Calu3 (cell line): ENCODE measurements at regions of chr11 and their contacts with region 1.

Region 1: GRCh38 chr11:60169264-60169915 is 13.5 kb downstream of the MS4A6A start:
- DNase-seq: peak; percentile 90
- H3K4me3 Mint-ChIP-seq: no peak overlapping the region
- H3K27ac Mint-ChIP-seq: peak overlapping the region; percentile 81
- H3K4me1 Mint-ChIP-seq: peaks cover 80% of the 10 kb centered on the region
- H3K27me3 Mint-ChIP-seq: no peaks in the 10 kb centered on the region
- CTCF ChIP-seq: peak; percentile 62

Region 2: DNA sequence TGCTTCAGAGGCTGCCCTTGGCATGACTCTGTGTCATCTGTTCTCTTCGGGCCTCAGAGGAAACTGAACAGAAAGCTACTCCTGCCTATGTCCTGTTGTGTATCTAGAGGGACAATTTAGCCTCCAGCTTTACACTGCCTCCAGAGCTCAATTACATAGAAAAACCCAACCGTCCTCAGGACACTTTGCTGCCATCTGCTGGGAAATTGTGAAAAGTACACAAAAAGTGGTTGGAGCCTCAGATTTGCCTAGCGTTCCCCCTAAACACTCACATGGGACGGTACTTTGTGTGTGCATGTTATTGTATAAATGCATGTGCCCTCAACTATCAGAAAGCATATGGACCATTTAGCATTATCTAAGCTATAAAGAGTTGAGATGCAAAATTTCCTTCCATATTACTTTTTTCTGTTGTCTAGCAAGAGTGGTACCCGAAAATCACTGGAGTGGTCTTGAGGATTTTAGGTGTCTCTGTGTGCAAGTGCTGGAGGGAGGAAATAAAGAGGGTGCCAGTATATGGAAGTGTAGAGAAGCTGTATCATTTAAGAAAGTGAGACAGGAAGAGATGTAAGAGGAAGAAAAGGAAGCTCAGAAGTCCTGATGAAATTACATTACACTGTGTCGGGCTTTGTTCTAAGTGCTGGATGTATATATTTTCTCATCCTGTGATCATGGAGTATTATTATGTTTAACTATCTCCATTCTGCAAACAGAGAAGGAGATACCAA is 82.3 kb after region 1 on chr11:
- CTCF ChIA-PET with region 1: interaction called, 72 read pairs
- intact Hi-C with region 1: loop called (anchors 1 kb)
- DNase-seq: peak; percentile 13
- H3K4me3 Mint-ChIP-seq: no peak overlapping the region
- H3K27ac Mint-ChIP-seq: peak overlapping the region; percentile 33
- H3K4me1 Mint-ChIP-seq: peaks cover 12% of the 10 kb centered on the region
- H3K27me3 Mint-ChIP-seq: no peaks in the 10 kb centered on the region
- CTCF ChIP-seq: peak; percentile 41